ENCODE measurements at regions of chr21 and their contacts with region 1.

Region 1: GRCh38 chr21:42760951-42761680 is 107.7 kb downstream of the PDE9A start:
- DNase-seq: no peak

Region 2: GRCh38 chr21:42636538-42636930 is 124.6 kb before region 1 on chr21:
- in situ Hi-C with region 1: loop called (anchors 25 kb)
- DNase-seq: no peak

Region 3: GRCh38 chr21:43306911-43307676 is 546.0 kb after region 1 on chr21:
- in situ Hi-C with region 1: no loop called
- DNase-seq: no peak

Measured in KBM-7 (cell line).